K562 (cell line): ENCODE measurements at regions of chr12 and their contacts with region 1.

Region 1: GRCh38 chr12:96516472-96517430 is 27.4 kb downstream of the CFAP54 start:
- DNase-seq: peak; percentile 47 to 79 (median 50)
- ATAC-seq: peak; percentile 81
- H3K4me3 ChIP-seq: no peak overlapping the region
- H3K27ac ChIP-seq: no peak overlapping the region
- H3K4me1 ChIP-seq: no peaks in the 10 kb centered on the region; a peak in 1 of 5 replicates
- H3K27me3 ChIP-seq: peaks cover 0 to 4% of the 10 kb centered on the region in 2 experiments; a peak in 1 of 5 replicates
- CTCF ChIP-seq: peak; percentile 54 to 84 (median 67); a peak in 5 of 6 replicates
- EP300 ChIP-seq: no peak
- POLR2A ChIP-seq: no peak
- RAD21 ChIP-seq: peak; percentile 87 to 92

Region 2: DNA sequence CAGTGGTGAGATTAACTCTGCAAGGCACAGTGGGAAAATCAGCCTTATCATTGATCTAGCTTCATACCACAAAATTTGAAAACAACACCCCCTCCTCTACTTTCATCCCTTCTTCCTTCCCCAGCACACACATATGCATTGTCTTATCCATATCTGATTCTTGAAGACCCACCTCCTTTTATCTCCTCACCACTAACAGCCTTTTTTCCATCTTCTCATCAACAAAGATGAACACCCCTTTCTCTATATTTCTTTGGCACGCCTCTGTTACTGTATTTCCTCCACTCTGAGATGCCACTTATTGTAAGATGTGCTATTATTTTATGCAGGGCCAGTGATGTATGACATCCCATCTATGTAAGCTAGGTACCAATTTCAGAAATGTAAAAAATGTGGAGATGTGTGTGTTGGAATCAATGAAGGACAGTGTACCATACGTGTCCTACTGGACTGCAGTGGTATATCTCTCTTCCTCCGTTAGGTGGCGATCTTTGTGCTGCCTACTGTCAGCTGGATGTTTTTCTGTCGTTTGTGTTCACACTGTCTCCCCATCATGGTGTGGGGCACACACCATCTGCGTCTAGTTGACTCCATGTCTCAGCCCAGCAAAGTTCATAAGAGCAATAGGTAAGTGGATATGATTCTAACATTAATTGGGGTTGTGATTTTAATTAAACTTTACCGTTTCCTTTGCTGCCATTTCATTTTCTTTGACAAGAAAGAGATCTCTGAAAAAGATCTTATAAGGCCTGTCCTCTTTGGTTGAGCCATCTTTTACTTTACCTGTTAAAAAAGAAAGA is 598.4 kb before region 1 on chr12:
- CTCF ChIA-PET with region 1: interaction called, 3 read pairs
- POLR2A ChIA-PET with region 1: no interaction called
- in situ Hi-C with region 1: no loop called
- intact Hi-C with region 1: loop called (anchors 5 kb)
- DNase-seq: peak; percentile 17 to 53 (median 25)
- ATAC-seq: peak; percentile 92
- H3K4me3 ChIP-seq: no peak overlapping the region
- H3K27ac ChIP-seq: no peak overlapping the region
- H3K4me1 ChIP-seq: no peaks in the 10 kb centered on the region
- H3K27me3 ChIP-seq: no peaks in the 10 kb centered on the region; a peak in 1 of 5 replicates
- CTCF ChIP-seq: peak; percentile 64 to 75 (median 75)
- EP300 ChIP-seq: no peak
- POLR2A ChIP-seq: no peak
- RAD21 ChIP-seq: peak; percentile 42 to 76

Region 3: GRCh38 chr12:96069511-96070231 is 447.1 kb before region 1 on chr12:
- CTCF ChIA-PET with region 1: interaction called, 3 read pairs
- POLR2A ChIA-PET with region 1: interaction called, 4 read pairs
- in situ Hi-C with region 1: loop called (anchors 5 kb)
- intact Hi-C with region 1: no loop called
- DNase-seq: no peak
- ATAC-seq: no peak
- H3K4me3 ChIP-seq: no peak overlapping the region
- H3K27ac ChIP-seq: no peak overlapping the region
- H3K4me1 ChIP-seq: no peaks in the 10 kb centered on the region
- H3K27me3 ChIP-seq: peaks cover 14 to 44% of the 10 kb centered on the region in 2 experiments; a peak in 4 of 5 replicates
- CTCF ChIP-seq: no peak
- EP300 ChIP-seq: no peak
- POLR2A ChIP-seq: no peak
- RAD21 ChIP-seq: no peak

Region 4: DNA sequence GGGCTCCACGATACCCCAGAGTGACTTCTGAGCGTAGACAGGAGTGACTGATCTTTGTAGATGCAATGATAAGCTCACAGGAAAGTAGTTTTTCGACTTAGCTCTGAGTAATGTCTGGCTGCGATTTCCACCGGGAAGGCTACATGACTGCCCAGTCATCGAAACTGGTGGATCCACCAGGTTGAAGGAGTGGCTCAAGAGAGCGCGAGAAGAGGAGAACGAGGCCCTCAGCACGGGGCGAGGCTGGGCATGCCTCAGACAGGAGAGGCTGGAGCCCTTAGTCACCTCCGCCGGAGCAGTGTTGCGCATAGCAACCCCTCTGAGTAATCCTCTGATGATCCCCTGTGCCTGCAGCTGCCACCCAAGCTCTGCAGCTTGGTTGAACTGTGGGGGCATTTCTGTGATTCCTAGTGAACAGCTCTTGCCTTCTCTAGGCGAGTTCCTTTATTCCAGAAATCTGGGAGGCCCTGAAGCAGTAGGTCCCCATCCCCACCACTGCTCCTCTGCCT is 297.0 kb before region 1 on chr12:
- CTCF ChIA-PET with region 1: interaction called, 8 read pairs
- POLR2A ChIA-PET with region 1: interaction called, 3 read pairs
- in situ Hi-C with region 1: no loop called
- intact Hi-C with region 1: loop called (anchors 2 kb)
- DNase-seq: no peak
- ATAC-seq: no peak; the same call in 1 of the 3 replicates
- H3K4me3 ChIP-seq: no peak overlapping the region
- H3K27ac ChIP-seq: no peak overlapping the region
- H3K4me1 ChIP-seq: no peaks in the 10 kb centered on the region
- H3K27me3 ChIP-seq: 0 out of 5 replicates have a peak, but pooled peaks cover 0 to 3% of the 10 kb centered on the region in 2 experiments
- CTCF ChIP-seq: no peak
- EP300 ChIP-seq: no peak
- POLR2A ChIP-seq: no peak
- RAD21 ChIP-seq: no peak

Region 5: GRCh38 chr12:96399919-96400797 is 116.6 kb before region 1 on chr12 and contains the start of gene CDK17:
- CTCF ChIA-PET with region 1: interaction called, 4 read pairs
- POLR2A ChIA-PET with region 1: no interaction called
- in situ Hi-C with region 1: no loop called
- intact Hi-C with region 1: loop called (anchors 2 kb)
- DNase-seq: peak; percentile 89 to 94 (median 93)
- ATAC-seq: peak; percentile 67
- H3K4me3 ChIP-seq: peak within 1 kb of the TSS; percentile 90
- H3K27ac ChIP-seq: peak within 1 kb of the TSS; percentile 96
- H3K4me1 ChIP-seq: peaks cover 10% of the 10 kb centered on the region in 2 experiments; a peak in 3 of 5 replicates
- H3K27me3 ChIP-seq: no peaks in the 10 kb centered on the region
- CTCF ChIP-seq: peak; percentile 25 to 75 (median 58); a peak in 4 of 6 replicates
- EP300 ChIP-seq: no peak
- POLR2A ChIP-seq: peak; percentile 76
- RAD21 ChIP-seq: peak; percentile 50 to 51
- polyA plus RNA-seq, gene CDK17: 4.8 to 5.4 TPM

Region 6: GRCh38 chr12:96416033-96416801 is 100.5 kb before region 1 on chr12:
- CTCF ChIA-PET with region 1: no interaction called
- POLR2A ChIA-PET with region 1: no interaction called
- in situ Hi-C with region 1: no loop called
- intact Hi-C with region 1: no loop called
- DNase-seq: no peak
- ATAC-seq: no peak
- H3K4me3 ChIP-seq: no peak overlapping the region
- H3K27ac ChIP-seq: no peak overlapping the region
- H3K4me1 ChIP-seq: no peaks in the 10 kb centered on the region
- H3K27me3 ChIP-seq: no peaks in the 10 kb centered on the region
- CTCF ChIP-seq: no peak
- EP300 ChIP-seq: no peak
- POLR2A ChIP-seq: no peak
- RAD21 ChIP-seq: no peak

Region 7: GRCh38 chr12:96534339-96534738 is 17.6 kb after region 1 on chr12:
- CTCF ChIA-PET with region 1: no interaction called
- POLR2A ChIA-PET with region 1: no interaction called
- in situ Hi-C with region 1: no loop called
- intact Hi-C with region 1: no loop called
- DNase-seq: no peak
- ATAC-seq: no peak
- H3K4me3 ChIP-seq: no peak overlapping the region
- H3K27ac ChIP-seq: no peak overlapping the region
- H3K4me1 ChIP-seq: no peaks in the 10 kb centered on the region
- H3K27me3 ChIP-seq: peaks cover 0 to 5% of the 10 kb centered on the region in 2 experiments; a peak in 1 of 5 replicates
- CTCF ChIP-seq: no peak
- EP300 ChIP-seq: no peak
- POLR2A ChIP-seq: no peak
- RAD21 ChIP-seq: no peak